PC-9 (cell line): ENCODE measurements at regions of chr9 and their contacts with region 1.

Region 1: GRCh38 chr9:114738581-114739316 is 56.8 kb upstream of the TEX48 start:
- DNase-seq: peak; percentile 68 to 69
- H3K4me3 ChIP-seq: no peak overlapping the region
- H3K27ac ChIP-seq: no peak overlapping the region
- H3K4me1 ChIP-seq: peaks cover 19% of the 10 kb centered on the region
- H3K27me3 ChIP-seq: no peaks in the 10 kb centered on the region
- CTCF ChIP-seq: peak; percentile 92

Region 2: GRCh38 chr9:114574438-114574837 is 164.3 kb before region 1 on chr9:
- CTCF ChIA-PET with region 1: no interaction called
- POLR2A ChIA-PET with region 1: no interaction called
- intact Hi-C with region 1: no loop called
- DNase-seq: no peak
- H3K4me3 ChIP-seq: no peak overlapping the region
- H3K27ac ChIP-seq: no peak overlapping the region
- H3K4me1 ChIP-seq: peaks cover 9% of the 10 kb centered on the region; the same call in 1 of the 2 replicates
- H3K27me3 ChIP-seq: no peaks in the 10 kb centered on the region
- CTCF ChIP-seq: no peak

Region 3: DNA sequence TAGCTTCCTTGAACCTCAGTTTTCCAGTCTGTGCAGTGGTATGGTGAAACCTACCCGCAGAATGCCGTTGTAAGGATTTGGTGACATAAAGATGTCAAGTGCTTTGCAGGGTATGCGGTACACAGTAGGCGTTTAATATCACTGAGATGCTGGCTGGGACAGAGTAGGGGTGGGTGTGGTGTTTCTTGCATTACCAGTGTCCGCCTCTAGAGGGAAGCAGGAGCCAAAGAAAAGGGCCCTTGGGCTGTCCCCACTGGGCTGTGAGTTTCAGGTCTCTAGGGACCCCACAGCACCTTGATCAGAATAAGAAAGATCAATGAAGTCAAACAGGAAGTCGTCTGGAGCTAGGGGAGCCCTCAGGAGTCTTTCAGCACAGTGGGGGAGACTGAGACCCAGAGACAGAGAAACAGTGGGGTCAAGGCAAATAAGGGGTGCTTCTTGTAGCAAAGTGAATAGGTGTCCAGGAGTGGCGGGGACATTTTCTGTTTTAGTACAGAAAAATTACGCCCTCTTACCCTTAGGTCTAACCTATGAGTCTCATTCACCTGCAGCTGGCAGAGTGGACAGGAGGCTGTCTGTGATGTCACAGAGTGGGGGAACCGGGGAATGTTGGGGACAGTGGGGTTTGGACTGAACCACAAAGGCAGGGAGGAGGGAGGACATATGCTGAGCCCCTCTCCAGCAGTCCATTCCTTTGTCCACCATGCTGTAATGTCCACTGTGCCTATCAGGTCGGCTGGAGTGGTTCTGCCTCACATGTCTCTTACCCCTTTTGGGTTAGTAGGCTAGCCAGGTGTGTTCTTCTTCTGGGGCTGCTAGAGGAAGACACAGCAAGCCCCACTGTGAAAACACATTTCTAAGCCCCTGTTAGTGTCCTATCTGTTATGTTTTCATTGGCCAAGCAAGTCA is 76.4 kb before region 1 on chr9:
- CTCF ChIA-PET with region 1: no interaction called
- POLR2A ChIA-PET with region 1: no interaction called
- intact Hi-C with region 1: loop called (anchors 2 kb)
- DNase-seq: peak in 1 of 2 experiments; percentile 58
- H3K4me3 ChIP-seq: no peak overlapping the region
- H3K27ac ChIP-seq: no peak overlapping the region
- H3K4me1 ChIP-seq: no peaks in the 10 kb centered on the region
- H3K27me3 ChIP-seq: no peaks in the 10 kb centered on the region
- CTCF ChIP-seq: peak; percentile 96

Region 4: GRCh38 chr9:114824110-114824509 is 85.4 kb after region 1 on chr9:
- CTCF ChIA-PET with region 1: no interaction called
- POLR2A ChIA-PET with region 1: no interaction called
- intact Hi-C with region 1: no loop called
- DNase-seq: no peak
- H3K4me3 ChIP-seq: no peak overlapping the region
- H3K27ac ChIP-seq: no peak overlapping the region
- H3K4me1 ChIP-seq: no peaks in the 10 kb centered on the region
- H3K27me3 ChIP-seq: no peaks in the 10 kb centered on the region
- CTCF ChIP-seq: no peak

Region 5: GRCh38 chr9:114968671-114969070 is 229.9 kb after region 1 on chr9:
- CTCF ChIA-PET with region 1: no interaction called
- POLR2A ChIA-PET with region 1: no interaction called
- intact Hi-C with region 1: no loop called
- DNase-seq: no peak
- H3K4me3 ChIP-seq: no peak overlapping the region
- H3K27ac ChIP-seq: no peak overlapping the region
- H3K4me1 ChIP-seq: no peaks in the 10 kb centered on the region
- H3K27me3 ChIP-seq: peaks cover 4% of the 10 kb centered on the region; the same call in 1 of the 2 replicates
- CTCF ChIP-seq: no peak

Region 6: GRCh38 chr9:115524453-115525059 is 785.8 kb after region 1 on chr9:
- CTCF ChIA-PET with region 1: no interaction called
- POLR2A ChIA-PET with region 1: no interaction called
- intact Hi-C with region 1: loop called (anchors 2 kb)
- DNase-seq: peak; percentile 30 to 60
- H3K4me3 ChIP-seq: no peak overlapping the region
- H3K27ac ChIP-seq: no peak overlapping the region
- H3K4me1 ChIP-seq: no peaks in the 10 kb centered on the region
- H3K27me3 ChIP-seq: no peaks in the 10 kb centered on the region
- CTCF ChIP-seq: peak; percentile 84

Region 7: GRCh38 chr9:116661037-116661954 is 1922.5 kb after region 1 on chr9:
- CTCF ChIA-PET with region 1: no interaction called
- POLR2A ChIA-PET with region 1: no interaction called
- intact Hi-C with region 1: loop called (anchors 5 kb)
- DNase-seq: peak; percentile 35 to 60
- H3K4me3 ChIP-seq: no peak overlapping the region
- H3K27ac ChIP-seq: no peak overlapping the region
- H3K4me1 ChIP-seq: no peaks in the 10 kb centered on the region
- H3K27me3 ChIP-seq: no peaks in the 10 kb centered on the region
- CTCF ChIP-seq: peak; percentile 84